Mammary epithelial cell (primary cell): ENCODE measurements at regions of chr12 and their contacts with region 1.

Region 1: GRCh38 chr12:22459838-22460490 is 84.4 kb downstream of the C2CD5 start:
- DNase-seq: peak; percentile 48
- H3K4me3 ChIP-seq: no peak overlapping the region
- H3K27ac ChIP-seq: no peak overlapping the region
- H3K4me1 ChIP-seq: no peaks in the 10 kb centered on the region
- H3K27me3 ChIP-seq: no peaks in the 10 kb centered on the region
- CTCF ChIP-seq: peak; percentile 48 to 67

Region 2: GRCh38 chr12:22083167-22083566 is 376.8 kb before region 1 on chr12:
- CTCF ChIA-PET with region 1: no interaction called
- dilution Hi-C with region 1: no loop called
- in situ Hi-C with region 1: no loop called
- intact Hi-C with region 1: loop called (anchors 1 kb)
- DNase-seq: peak; percentile 30
- H3K4me3 ChIP-seq: no peak overlapping the region
- H3K27ac ChIP-seq: no peak overlapping the region
- H3K4me1 ChIP-seq: no peaks in the 10 kb centered on the region
- H3K27me3 ChIP-seq: no peaks in the 10 kb centered on the region
- CTCF ChIP-seq: peak in 1 of 2 donors; percentile 57

Region 3: GRCh38 chr12:22334410-22335290 is 125.3 kb before region 1 on chr12 and contains the start of gene ST8SIA1:
- CTCF ChIA-PET with region 1: no interaction called
- dilution Hi-C with region 1: no loop called
- in situ Hi-C with region 1: no loop called
- intact Hi-C with region 1: no loop called
- DNase-seq: peak; percentile 34
- H3K4me3 ChIP-seq: peak within 1 kb of the TSS; percentile 67 to 83 (median 79)
- H3K27ac ChIP-seq: peak within 1 kb of the TSS; percentile 47
- H3K4me1 ChIP-seq: peaks cover 15% of the 10 kb centered on the region
- H3K27me3 ChIP-seq: peaks cover 5% of the 10 kb centered on the region
- CTCF ChIP-seq: no peak
- total RNA-seq, gene ST8SIA1: 0.50 to 0.87 TPM

Region 4: GRCh38 chr12:22631863-22632463 is 172.0 kb after region 1 on chr12:
- CTCF ChIA-PET with region 1: no interaction called
- dilution Hi-C with region 1: no loop called
- in situ Hi-C with region 1: no loop called
- intact Hi-C with region 1: loop called (anchors 1 kb)
- DNase-seq: no peak
- H3K4me3 ChIP-seq: no peak overlapping the region
- H3K27ac ChIP-seq: no peak overlapping the region
- H3K4me1 ChIP-seq: peaks cover 18% of the 10 kb centered on the region
- H3K27me3 ChIP-seq: no peaks in the 10 kb centered on the region
- CTCF ChIP-seq: peak; percentile 55 to 62